ENCODE measurements at regions of chr12 and their contacts with region 1.

Region 1: DNA sequence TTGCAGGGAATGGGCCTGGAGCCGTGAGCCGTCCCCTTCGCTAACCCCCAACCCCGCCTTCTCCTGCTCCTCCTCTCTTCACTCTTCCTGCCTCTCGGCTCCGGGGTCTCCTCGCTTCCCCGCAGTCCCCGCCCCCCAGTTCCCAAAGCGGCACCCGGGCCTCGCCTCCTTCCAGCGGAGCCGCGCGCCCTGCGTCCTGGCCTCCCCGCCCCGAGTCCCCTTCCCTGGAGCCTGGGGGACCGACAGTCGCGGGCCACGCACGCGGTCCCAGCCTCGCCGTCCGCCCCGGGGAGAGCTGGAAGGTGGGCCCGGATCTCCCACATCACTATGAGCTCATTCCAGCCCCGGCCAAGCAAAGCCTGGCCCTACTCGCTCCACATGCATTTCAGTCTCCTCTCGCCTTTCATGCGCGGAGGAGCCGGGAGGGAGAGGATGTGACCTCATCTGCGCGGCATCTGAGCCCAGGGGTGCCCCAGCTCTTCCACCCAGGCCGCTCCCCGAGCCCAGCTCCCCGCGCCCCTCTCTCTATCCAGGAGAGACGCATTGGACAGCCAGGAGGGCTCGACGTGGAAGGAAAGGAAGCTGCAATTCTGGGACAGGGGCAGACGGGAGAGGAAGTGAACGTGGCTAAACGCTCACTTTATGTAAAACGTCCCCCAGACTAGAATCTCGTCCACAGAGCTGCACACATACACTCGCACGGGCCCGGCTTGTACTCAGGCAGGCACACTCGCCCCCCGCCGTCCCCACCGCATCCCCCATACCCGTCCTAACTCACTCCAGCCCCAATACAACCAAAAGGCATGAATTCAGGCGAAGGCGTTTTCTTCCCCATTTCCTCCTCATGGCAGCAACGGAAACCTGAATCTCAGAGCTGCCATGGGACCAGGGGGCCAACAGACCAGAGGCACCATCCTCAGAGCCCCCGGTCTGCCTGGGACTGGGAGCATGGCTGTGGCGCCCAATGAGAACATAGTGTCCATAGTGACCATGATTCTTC is 108.7 kb upstream of the CCND2 start:
- DNase-seq: peak; percentile 77
- ATAC-seq: peak; percentile 97
- H3K4me3 Mint-ChIP-seq: peak overlapping the region; percentile 75
- H3K27ac Mint-ChIP-seq: peak overlapping the region; percentile 94
- H3K4me1 Mint-ChIP-seq: peaks cover 55% of the 10 kb centered on the region
- H3K27me3 Mint-ChIP-seq: peaks cover 2% of the 10 kb centered on the region

Region 2: DNA sequence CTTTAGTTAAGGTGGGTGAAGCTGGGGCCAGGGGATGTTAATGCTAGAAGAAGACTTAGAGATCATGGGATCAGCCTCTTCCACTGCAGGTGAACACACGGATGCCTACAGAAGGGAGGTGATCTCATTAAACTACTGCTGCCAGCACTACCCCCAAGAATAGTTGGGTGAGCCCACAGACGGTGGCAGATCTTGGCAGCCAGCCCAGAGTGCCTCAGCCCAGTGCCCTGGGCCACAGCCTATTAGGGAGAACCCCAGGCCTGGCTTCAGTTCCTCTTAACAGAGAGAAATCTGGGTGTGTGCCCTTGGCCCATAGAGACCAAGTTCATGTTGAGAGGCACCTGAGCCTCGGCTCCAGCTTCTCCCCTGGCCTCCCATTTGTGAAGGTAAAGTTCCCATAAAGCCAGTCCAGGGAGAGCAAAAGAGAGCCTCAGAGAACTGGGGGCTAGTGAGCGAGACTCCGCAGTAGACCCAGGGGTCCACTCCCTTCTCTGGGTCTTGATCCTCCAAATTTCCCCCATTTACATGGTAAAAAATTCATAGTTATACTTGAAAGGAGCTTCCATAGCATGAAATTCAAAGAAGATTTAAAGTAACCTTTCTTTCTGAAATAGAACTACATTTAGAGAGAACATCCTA is 16.3 kb before region 1 on chr12:
- CTCF ChIA-PET with region 1: interaction called, 9 read pairs
- POLR2A ChIA-PET with region 1: interaction called, 35 read pairs
- DNase-seq: peak; percentile 39
- ATAC-seq: no peak
- H3K4me3 Mint-ChIP-seq: no peak overlapping the region
- H3K27ac Mint-ChIP-seq: peak overlapping the region; percentile 74
- H3K4me1 Mint-ChIP-seq: peaks cover 96% of the 10 kb centered on the region
- H3K27me3 Mint-ChIP-seq: no peaks in the 10 kb centered on the region

Region 3: DNA sequence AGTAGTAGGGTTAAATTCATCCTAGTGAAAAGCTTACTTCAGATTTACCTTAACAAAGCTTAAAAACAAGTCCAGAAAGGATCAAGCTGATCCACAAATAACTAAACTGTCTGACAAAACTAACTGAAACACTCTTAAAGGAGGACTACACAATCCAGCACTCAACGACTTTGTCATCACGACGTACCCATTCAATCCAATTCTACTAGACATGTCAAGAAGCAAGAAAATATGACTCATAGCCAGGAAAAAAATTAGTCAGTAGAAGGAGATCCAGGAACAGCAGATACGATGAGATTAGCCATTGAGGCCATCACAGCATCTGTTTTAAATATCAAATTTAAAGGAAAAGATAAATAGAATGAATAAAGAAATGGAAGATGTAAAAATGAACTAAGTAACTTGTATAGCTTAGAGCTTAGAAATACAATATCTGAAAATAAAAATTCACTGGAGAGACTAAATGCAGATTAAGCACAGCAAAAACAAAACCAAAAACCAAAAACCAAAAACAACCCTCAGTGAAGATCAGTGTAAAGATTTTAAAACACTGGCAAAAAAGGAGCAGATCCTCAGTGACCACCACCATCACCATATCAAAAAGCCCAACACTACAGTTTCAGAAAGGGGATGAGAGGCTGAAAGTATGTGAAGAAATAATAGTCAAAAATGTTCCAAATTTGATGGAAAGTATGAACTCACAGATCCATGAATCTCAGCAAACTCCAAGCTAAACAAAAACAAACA is 13.7 kb after region 1 on chr12:
- CTCF ChIA-PET with region 1: interaction called, 15 read pairs
- POLR2A ChIA-PET with region 1: interaction called, 10 read pairs
- DNase-seq: peak; percentile 21
- ATAC-seq: peak; percentile 65
- H3K4me3 Mint-ChIP-seq: no peak overlapping the region
- H3K27ac Mint-ChIP-seq: peak overlapping the region; percentile 56
- H3K4me1 Mint-ChIP-seq: peaks cover 30% of the 10 kb centered on the region
- H3K27me3 Mint-ChIP-seq: no peaks in the 10 kb centered on the region